ENCODE measurements at regions of chr2 and their contacts with region 1.

Region 1: DNA sequence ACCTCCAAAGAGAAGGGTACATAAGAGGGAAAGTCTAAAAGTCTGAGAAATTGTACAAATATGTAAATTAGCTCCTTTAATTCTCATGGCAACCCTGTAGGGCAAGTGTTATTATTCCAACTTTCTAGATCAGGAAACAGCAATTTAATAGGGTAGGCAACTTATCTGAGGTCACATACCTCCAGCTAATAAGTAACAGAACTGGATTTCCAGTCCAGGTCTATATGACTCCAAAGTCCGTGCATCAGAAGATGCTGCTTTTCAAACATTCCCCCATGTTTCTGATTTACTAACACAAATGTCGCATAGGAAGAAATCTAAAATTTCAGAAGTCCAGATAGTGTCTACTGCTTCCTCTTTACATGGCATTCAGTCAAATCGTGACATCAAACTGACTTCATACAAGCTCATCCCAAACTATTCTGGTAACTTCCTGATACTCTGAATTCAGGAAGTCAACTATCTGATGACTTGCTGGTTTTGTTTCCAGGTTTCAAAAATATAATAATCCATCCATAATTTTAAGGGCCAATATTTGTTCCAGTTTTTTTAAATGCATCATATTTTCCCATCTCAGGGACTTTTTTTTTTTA is 419.3 kb upstream of the ACVR2A start:
- DNase-seq: no peak
- ATAC-seq: no peak
- H3K4me3 ChIP-seq: no peak overlapping the region
- H3K27ac ChIP-seq: no peak overlapping the region; the same call in 1 of the 2 replicates
- H3K4me1 ChIP-seq: peaks cover 25% of the 10 kb centered on the region
- H3K27me3 ChIP-seq: no peaks in the 10 kb centered on the region
- CTCF ChIP-seq: no peak

Region 2: DNA sequence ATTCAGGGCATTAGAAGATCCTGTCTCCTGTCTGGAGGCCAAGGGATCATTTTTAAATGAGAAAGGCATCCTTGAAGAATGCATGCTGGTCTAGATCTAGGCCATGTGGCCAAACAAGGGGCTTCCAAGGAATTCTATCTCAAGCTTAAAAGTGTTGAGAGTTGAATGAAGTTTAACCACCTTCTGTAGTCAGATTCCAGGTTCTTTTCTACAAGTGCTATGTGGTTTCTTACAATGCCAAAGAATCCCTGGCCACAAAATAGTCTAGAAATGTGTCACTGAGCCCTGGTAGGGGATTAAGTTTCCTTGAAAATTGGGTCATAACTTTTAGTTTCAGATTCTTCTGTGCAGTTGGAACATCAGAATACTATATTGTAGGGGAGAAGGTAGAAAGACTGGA is 221.4 kb before region 1 on chr2:
- CTCF ChIA-PET with region 1: no interaction called
- POLR2A ChIA-PET with region 1: no interaction called
- intact Hi-C with region 1: no loop called
- DNase-seq: peak; percentile 77
- ATAC-seq: peak; percentile 67
- H3K4me3 ChIP-seq: no peak overlapping the region
- H3K27ac ChIP-seq: peak overlapping the region; percentile 64
- H3K4me1 ChIP-seq: peaks cover 15% of the 10 kb centered on the region
- H3K27me3 ChIP-seq: no peaks in the 10 kb centered on the region
- CTCF ChIP-seq: no peak

Region 3: DNA sequence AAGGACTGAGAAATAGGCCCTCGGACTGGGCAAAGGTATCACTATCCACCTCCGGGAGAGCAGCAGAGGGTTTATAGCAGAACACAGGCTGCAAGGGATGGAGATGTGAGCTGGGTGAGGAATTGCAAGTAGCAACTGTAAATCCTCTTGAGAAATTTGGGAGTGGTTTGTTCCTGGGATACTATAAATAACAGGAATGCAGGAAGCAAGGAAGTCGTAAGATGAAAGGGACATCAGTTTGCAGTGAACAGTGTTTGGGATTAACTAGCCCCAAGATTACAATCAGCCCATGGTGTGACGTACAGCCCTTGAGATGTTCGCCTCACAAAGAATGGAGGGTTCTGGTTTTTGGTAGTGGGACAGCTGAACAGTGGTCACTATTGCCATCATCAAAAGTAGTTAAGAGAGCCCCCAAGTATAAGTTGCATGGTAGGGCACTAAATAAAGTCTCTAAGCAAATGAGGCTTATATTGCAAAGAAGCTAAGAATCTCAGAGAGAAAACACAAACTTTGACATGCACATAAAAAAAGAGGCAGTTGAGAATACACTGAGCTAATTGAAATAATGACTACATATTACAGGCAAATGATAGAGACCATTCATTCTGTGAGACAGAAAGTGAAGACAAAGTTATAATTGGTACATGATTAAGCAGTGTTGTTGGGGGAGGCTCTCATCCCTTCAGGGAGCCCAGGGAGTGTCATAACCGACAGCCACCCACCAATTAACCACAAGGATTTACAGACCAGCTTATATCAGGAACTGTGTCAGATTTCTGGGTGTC is 56.8 kb after region 1 on chr2:
- CTCF ChIA-PET with region 1: no interaction called
- POLR2A ChIA-PET with region 1: no interaction called
- intact Hi-C with region 1: loop called (anchors 5 kb)
- DNase-seq: no peak
- ATAC-seq: no peak; the same call in 1 of the 2 replicates
- H3K4me3 ChIP-seq: no peak overlapping the region
- H3K27ac ChIP-seq: no peak overlapping the region
- H3K4me1 ChIP-seq: peaks cover 11% of the 10 kb centered on the region
- H3K27me3 ChIP-seq: no peaks in the 10 kb centered on the region
- CTCF ChIP-seq: no peak

Region 4: GRCh38 chr2:147623328-147623727 is 197.8 kb after region 1 on chr2:
- CTCF ChIA-PET with region 1: no interaction called
- POLR2A ChIA-PET with region 1: no interaction called
- intact Hi-C with region 1: loop called (anchors 10 kb)
- DNase-seq: peak; percentile 85
- ATAC-seq: peak; percentile 99
- H3K4me3 ChIP-seq: 0 out of 2 replicates have a peak overlapping the region, but pooled peaks have one; percentile 7
- H3K27ac ChIP-seq: peak overlapping the region; percentile 41
- H3K4me1 ChIP-seq: peaks cover 13% of the 10 kb centered on the region
- H3K27me3 ChIP-seq: no peaks in the 10 kb centered on the region
- CTCF ChIP-seq: no peak